ENCODE measurements at regions of chr16 and their contacts with region 1.

Region 1: GRCh38 chr16:25905810-25906209 is 214.1 kb downstream of the HS3ST4 start:
- DNase-seq: no peak
- H3K4me3 ChIP-seq: no peak overlapping the region
- H3K27ac ChIP-seq: no peak overlapping the region
- H3K4me1 ChIP-seq: no peaks in the 10 kb centered on the region
- H3K27me3 ChIP-seq: no peaks in the 10 kb centered on the region
- CTCF ChIP-seq: no peak

Region 2: DNA sequence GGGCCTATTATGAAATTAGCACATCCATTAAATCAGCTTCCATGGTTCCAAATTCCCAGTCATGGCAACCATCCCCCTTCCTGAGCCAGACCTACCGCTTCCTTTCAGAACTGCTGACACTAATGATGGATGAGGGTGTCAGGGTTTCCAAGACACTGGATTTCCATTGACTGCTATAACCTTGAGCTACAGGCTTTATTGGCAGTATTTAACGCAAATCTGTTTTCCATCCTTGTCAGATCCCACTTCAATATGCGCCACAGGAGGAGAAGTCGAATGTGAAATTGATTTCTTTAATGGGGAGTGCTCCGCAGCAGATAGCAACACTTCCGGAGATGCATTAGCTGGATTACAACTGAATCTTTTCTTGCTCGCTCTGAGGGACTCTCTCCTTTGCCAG is 16.9 kb before region 1 on chr16:
- CTCF ChIA-PET with region 1: no interaction called
- dilution Hi-C with region 1: no loop called
- in situ Hi-C with region 1: no loop called
- intact Hi-C with region 1: no loop called
- DNase-seq: no peak
- H3K4me3 ChIP-seq: no peak overlapping the region
- H3K27ac ChIP-seq: no peak overlapping the region
- H3K4me1 ChIP-seq: no peaks in the 10 kb centered on the region
- H3K27me3 ChIP-seq: no peaks in the 10 kb centered on the region
- CTCF ChIP-seq: no peak

Region 3: GRCh38 chr16:25950586-25951281 is 44.9 kb after region 1 on chr16:
- CTCF ChIA-PET with region 1: no interaction called
- dilution Hi-C with region 1: loop called (anchors 5 kb)
- in situ Hi-C with region 1: no loop called
- intact Hi-C with region 1: no loop called
- DNase-seq: no peak
- H3K4me3 ChIP-seq: no peak overlapping the region
- H3K27ac ChIP-seq: no peak overlapping the region
- H3K4me1 ChIP-seq: no peaks in the 10 kb centered on the region
- H3K27me3 ChIP-seq: no peaks in the 10 kb centered on the region
- CTCF ChIP-seq: no peak